Head of caudate nucleus (tissue), 42 donors: ENCODE measurements at regions of chr16 and their contacts with region 1.

Region 1: GRCh38 chr16:10509534-10510025 is 70.8 kb downstream of the EMP2 start:
- DNase-seq: peak; percentile 27 to 88 (median 72)

Region 2: GRCh38 chr16:10314811-10315210 is 194.8 kb before region 1 on chr16:
- intact Hi-C with region 1: loop called (anchors 5 kb)
- DNase-seq: peak in 8 of 42 donors; percentile 7 to 47 (median 16)

Region 3: DNA sequence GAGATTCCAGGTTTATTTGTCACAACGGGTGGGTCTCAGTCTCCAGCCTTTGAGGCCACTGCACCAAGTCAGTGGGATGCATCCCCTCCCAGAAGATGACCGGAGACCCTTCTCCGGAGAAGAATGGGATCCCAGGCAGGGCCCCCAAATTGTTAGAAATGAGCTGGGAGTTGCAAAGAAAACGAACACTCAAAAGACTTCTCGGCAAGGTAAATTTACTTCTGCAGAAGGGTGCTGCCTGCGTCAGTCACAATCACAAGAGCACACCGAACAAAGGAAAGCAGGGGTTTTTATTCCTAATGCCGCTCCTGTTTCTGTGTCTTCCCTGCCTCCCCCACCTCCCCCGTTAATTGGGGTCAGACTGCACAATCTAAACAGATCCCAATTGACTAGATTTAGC is 62.3 kb before region 1 on chr16:
- intact Hi-C with region 1: no loop called
- DNase-seq: no peak

Region 4: GRCh38 chr16:10737068-10737625 is 227.6 kb after region 1 on chr16:
- intact Hi-C with region 1: loop called (anchors 5 kb)
- DNase-seq: peak in 37 of 42 donors; percentile 31 to 88 (median 68)